ENCODE measurements at regions of chr15 and their contacts with region 1.

Region 1: DNA sequence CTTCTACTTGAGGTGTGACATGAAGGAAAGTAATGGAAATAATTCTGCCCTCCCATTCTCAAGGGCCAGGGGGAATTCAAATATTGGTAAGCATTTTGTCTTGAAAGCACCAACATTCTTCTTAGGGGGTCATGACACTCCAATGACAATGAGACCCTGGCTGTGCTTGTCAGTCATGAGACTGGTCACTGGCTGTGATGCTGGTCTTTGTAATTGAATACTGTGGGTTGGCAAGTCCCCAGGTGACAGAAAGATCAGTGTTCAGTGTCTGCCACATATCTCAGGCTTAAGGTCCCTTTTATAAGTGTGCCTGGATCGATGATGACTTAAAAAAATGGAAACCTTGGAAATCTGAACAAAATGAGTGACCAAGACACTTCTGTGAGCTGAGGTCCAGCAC is 151.4 kb downstream of the SNRPN start:
- DNase-seq: no peak
- ATAC-seq: no peak
- H3K4me3 ChIP-seq: no peak overlapping the region
- H3K27ac ChIP-seq: no peak overlapping the region
- H3K4me1 ChIP-seq: no peaks in the 10 kb centered on the region
- H3K27me3 ChIP-seq: no peaks in the 10 kb centered on the region
- CTCF ChIP-seq: no peak
- POLR2A ChIP-seq: no peak
- RAD21 ChIP-seq: no peak

Region 2: GRCh38 chr15:24621630-24622215 is 484.5 kb before region 1 on chr15:
- CTCF ChIA-PET with region 1: no interaction called
- POLR2A ChIA-PET with region 1: no interaction called
- dilution Hi-C with region 1: no loop called
- in situ Hi-C with region 1: no loop called
- intact Hi-C with region 1: no loop called
- DNase-seq: no peak
- ATAC-seq: no peak
- H3K4me3 ChIP-seq: no peak overlapping the region
- H3K27ac ChIP-seq: no peak overlapping the region
- H3K4me1 ChIP-seq: no peaks in the 10 kb centered on the region
- H3K27me3 ChIP-seq: no peaks in the 10 kb centered on the region
- CTCF ChIP-seq: no peak
- POLR2A ChIP-seq: no peak
- RAD21 ChIP-seq: no peak

Region 3: GRCh38 chr15:24985224-24985623 is 121.0 kb before region 1 on chr15:
- CTCF ChIA-PET with region 1: no interaction called
- POLR2A ChIA-PET with region 1: no interaction called
- dilution Hi-C with region 1: no loop called
- in situ Hi-C with region 1: loop called (anchors 10 kb)
- intact Hi-C with region 1: no loop called
- DNase-seq: no peak
- ATAC-seq: no peak
- H3K4me3 ChIP-seq: no peak overlapping the region
- H3K27ac ChIP-seq: no peak overlapping the region; the same call in 1 of the 2 replicates
- H3K4me1 ChIP-seq: no peaks in the 10 kb centered on the region
- H3K27me3 ChIP-seq: no peaks in the 10 kb centered on the region
- CTCF ChIP-seq: no peak
- POLR2A ChIP-seq: no peak
- RAD21 ChIP-seq: no peak

Region 4: GRCh38 chr15:25345943-25346342 is 239.7 kb after region 1 on chr15:
- CTCF ChIA-PET with region 1: no interaction called
- POLR2A ChIA-PET with region 1: no interaction called
- dilution Hi-C with region 1: no loop called
- in situ Hi-C with region 1: no loop called
- intact Hi-C with region 1: no loop called
- DNase-seq: peak; percentile 4
- ATAC-seq: peak; percentile 48; the same call in 1 of the 2 replicates
- H3K4me3 ChIP-seq: no peak overlapping the region
- H3K27ac ChIP-seq: no peak overlapping the region
- H3K4me1 ChIP-seq: no peaks in the 10 kb centered on the region
- H3K27me3 ChIP-seq: no peaks in the 10 kb centered on the region
- CTCF ChIP-seq: no peak
- POLR2A ChIP-seq: no peak
- RAD21 ChIP-seq: no peak

Measured in IMR-90 (cell line).